Activated CD8-positive, alpha-beta T cell treated with anti-CD3 and anti-CD28 coated beads for 36 hours (primary cell): ENCODE measurements at regions of chr2 and their contacts with region 1.

Region 1: GRCh38 chr2:98731041-98731893 is at the start of gene MGAT4A:
- DNase-seq: peak; percentile 77
- ATAC-seq: peak; percentile 79
- H3K4me3 Mint-ChIP-seq: peak within 1 kb of the TSS; percentile 89
- H3K27ac Mint-ChIP-seq: peak within 1 kb of the TSS; percentile 89
- H3K4me1 Mint-ChIP-seq: peaks cover 53% of the 10 kb centered on the region
- H3K27me3 Mint-ChIP-seq: no peaks in the 10 kb centered on the region
- CTCF ChIP-seq: no peak
- total RNA-seq, gene MGAT4A: 57.6 to 59.0 TPM

Region 2: DNA sequence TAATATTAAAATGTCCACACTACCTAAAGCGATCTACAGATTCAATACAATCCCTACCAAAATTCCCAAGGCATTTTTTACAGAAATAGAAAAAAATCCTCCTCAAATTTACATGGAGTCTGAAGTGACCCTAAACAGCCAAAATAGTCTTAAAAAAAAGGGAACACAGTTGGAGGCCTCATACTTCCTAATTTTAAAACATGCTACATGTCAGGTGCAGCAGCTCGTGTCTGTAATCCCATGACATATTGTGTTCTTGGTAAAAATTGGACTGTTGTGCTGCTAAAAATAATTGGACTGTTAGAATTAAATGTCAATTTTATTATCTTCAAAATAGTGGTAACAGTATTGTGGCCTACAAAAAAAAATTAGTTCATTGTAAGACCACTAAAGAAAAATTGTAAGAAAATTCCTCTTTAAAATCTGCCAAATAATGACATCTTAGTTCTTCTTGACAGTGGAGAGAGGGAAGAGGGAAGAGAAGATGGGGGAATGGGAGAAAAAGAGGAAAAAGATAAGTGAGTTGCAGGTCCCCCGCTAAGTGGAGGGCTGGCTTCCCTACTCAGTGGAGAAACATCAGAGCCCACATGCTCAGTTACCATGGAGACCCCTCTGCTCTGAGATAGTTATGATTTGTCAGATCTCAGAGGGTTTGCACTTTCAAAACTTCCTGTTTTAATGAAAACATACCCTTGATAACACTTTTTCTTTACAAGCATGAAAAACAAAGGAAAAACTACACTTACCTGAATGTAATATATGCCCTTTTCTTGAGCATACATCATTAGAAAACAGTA is 76.4 kb before region 1 on chr2:
- CTCF ChIA-PET with region 1: interaction called, 37 read pairs
- POLR2A ChIA-PET with region 1: interaction called, 65 read pairs
- intact Hi-C with region 1: no loop called
- DNase-seq: peak; percentile 76
- ATAC-seq: peak; percentile 64
- H3K4me3 Mint-ChIP-seq: peak overlapping the region; percentile 51
- H3K27ac Mint-ChIP-seq: peak overlapping the region; percentile 88
- H3K4me1 Mint-ChIP-seq: peaks cover 78% of the 10 kb centered on the region
- H3K27me3 Mint-ChIP-seq: no peaks in the 10 kb centered on the region
- CTCF ChIP-seq: no peak

Region 3: DNA sequence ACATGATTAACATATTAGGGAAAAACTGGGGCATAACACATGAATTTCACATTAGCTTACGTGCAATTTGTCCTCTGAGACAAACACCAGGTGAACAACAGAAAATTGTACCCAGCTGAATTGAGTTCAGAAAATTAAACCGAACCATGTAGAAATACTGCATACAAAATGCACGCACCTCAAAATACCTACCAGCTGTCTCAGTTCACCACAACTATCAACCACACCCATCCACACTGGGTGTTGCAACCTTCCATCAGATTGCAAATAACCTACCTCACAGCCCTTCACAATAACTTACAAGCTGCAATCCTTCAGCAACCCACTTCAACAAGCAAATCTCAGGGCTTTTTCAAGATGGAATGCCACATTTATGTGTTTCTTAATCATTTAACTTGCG is 66.9 kb before region 1 on chr2:
- CTCF ChIA-PET with region 1: interaction called, 37 read pairs
- POLR2A ChIA-PET with region 1: interaction called, 65 read pairs
- intact Hi-C with region 1: loop called (anchors 2 kb)
- DNase-seq: peak; percentile 78
- ATAC-seq: peak; percentile 42
- H3K4me3 Mint-ChIP-seq: peak overlapping the region; percentile 81
- H3K27ac Mint-ChIP-seq: peak overlapping the region; percentile 100
- H3K4me1 Mint-ChIP-seq: peaks cover 63% of the 10 kb centered on the region
- H3K27me3 Mint-ChIP-seq: no peaks in the 10 kb centered on the region
- CTCF ChIP-seq: no peak

Region 4: DNA sequence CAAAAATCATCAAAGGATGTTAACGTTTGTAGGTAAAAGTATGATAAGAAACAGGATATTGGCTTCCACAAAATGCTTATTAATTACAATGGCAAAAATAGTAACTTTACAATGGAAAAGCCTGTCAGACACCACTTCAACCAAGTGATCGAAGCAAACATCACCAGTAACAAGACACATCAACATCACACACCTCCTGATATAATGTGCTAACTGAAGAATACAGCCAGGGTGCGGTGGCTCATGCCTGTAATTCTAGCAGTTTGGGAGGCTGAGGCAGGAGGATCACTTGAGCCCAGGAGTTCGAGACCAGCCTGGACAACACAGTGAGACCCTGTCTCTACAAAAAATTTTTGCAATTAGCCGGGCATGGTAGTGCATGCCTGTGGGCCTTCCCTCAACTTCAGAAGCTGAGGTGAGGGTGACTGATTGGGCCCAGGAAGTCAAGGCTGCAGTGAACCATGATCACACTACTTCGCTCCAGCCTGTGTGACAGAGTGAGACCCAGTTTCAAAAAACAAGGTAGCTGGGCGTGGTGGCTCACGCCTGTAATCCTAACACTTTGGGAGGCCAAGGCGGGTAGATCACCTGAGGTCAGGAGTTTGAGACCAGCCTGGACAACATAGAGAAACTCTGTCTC is 15.3 kb before region 1 on chr2:
- CTCF ChIA-PET with region 1: interaction called, 7 read pairs
- POLR2A ChIA-PET with region 1: interaction called, 42 read pairs
- intact Hi-C with region 1: no loop called
- DNase-seq: peak; percentile 54
- ATAC-seq: peak; percentile 60
- H3K4me3 Mint-ChIP-seq: no peak overlapping the region
- H3K27ac Mint-ChIP-seq: peak overlapping the region; percentile 86
- H3K4me1 Mint-ChIP-seq: peaks cover 84% of the 10 kb centered on the region
- H3K27me3 Mint-ChIP-seq: no peaks in the 10 kb centered on the region
- CTCF ChIP-seq: no peak

Region 5: GRCh38 chr2:98757904-98758421 is 26.7 kb after region 1 on chr2:
- CTCF ChIA-PET with region 1: interaction called, 5 read pairs
- POLR2A ChIA-PET with region 1: interaction called, 11 read pairs
- intact Hi-C with region 1: no loop called
- DNase-seq: peak; percentile 73
- ATAC-seq: peak; percentile 69
- H3K4me3 Mint-ChIP-seq: peak overlapping the region; percentile 57
- H3K27ac Mint-ChIP-seq: peak overlapping the region; percentile 89
- H3K4me1 Mint-ChIP-seq: peaks cover 50% of the 10 kb centered on the region
- H3K27me3 Mint-ChIP-seq: no peaks in the 10 kb centered on the region
- CTCF ChIP-seq: no peak

Region 6: GRCh38 chr2:98771721-98772524 is 40.7 kb after region 1 on chr2:
- CTCF ChIA-PET with region 1: interaction called, 18 read pairs
- POLR2A ChIA-PET with region 1: interaction called, 85 read pairs
- intact Hi-C with region 1: loop called (anchors 2 kb)
- DNase-seq: peak; percentile 78
- ATAC-seq: peak; percentile 64
- H3K4me3 Mint-ChIP-seq: peak overlapping the region; percentile 85
- H3K27ac Mint-ChIP-seq: peak overlapping the region; percentile 98
- H3K4me1 Mint-ChIP-seq: peaks cover 69% of the 10 kb centered on the region
- H3K27me3 Mint-ChIP-seq: no peaks in the 10 kb centered on the region
- CTCF ChIP-seq: no peak

Region 7: DNA sequence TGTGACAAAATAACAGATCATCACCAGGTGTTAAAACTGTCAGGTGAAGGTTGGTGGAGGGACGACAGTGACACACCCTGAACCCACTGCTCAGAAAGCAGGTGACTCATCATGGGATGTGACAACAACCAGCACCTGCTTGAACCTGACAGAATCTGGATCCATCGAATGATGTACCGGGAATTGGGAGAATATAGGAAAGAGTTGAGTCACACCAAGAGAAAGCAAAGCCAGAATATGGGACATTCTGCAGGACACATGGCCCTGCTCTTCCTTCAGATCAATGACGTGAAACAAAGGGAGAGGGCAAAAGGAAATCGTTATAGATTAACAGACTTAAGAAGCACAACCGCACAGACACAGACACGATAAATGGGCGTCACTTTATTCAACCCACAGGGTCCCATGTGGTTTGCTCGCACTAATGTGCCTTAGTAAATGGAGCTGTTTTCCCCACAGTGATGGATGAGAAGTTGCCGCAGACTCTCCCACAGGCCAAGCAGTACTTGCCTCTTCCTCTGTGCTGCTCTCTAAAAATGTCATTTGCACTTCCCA is 104.6 kb after region 1 on chr2:
- CTCF ChIA-PET with region 1: interaction called, 9 read pairs
- POLR2A ChIA-PET with region 1: interaction called, 7 read pairs
- intact Hi-C with region 1: loop called (anchors 10 kb)
- DNase-seq: peak; percentile 66
- ATAC-seq: peak; percentile 80
- H3K4me3 Mint-ChIP-seq: peak overlapping the region; percentile 28
- H3K27ac Mint-ChIP-seq: peak overlapping the region; percentile 74
- H3K4me1 Mint-ChIP-seq: peaks cover 36% of the 10 kb centered on the region
- H3K27me3 Mint-ChIP-seq: no peaks in the 10 kb centered on the region
- CTCF ChIP-seq: no peak